ENCODE measurements at regions of chr18 and their contacts with region 1.

Region 1: GRCh38 chr18:26621161-26622026 is 73.0 kb upstream of the KCTD1 start:
- DNase-seq: peak; percentile 31 to 81 (median 63)
- H3K4me3 ChIP-seq: peak overlapping the region in 1 of 4 donors; percentile 39
- H3K27ac ChIP-seq: no peak overlapping the region
- H3K4me1 ChIP-seq: no peaks in the 10 kb centered on the region
- H3K27me3 ChIP-seq: no peaks in the 10 kb centered on the region
- CTCF ChIP-seq: peak; percentile 41 to 75 (median 70)
- POLR2A ChIP-seq: no peak

Region 2: GRCh38 chr18:26771524-26771923 is 150.1 kb after region 1 on chr18:
- intact Hi-C with region 1: loop called in 1 of 2 experiments (anchors 5 kb)
- DNase-seq: peak; percentile 38 to 67 (median 61)
- H3K4me3 ChIP-seq: no peak overlapping the region
- H3K27ac ChIP-seq: no peak overlapping the region
- H3K4me1 ChIP-seq: no peaks in the 10 kb centered on the region
- H3K27me3 ChIP-seq: no peaks in the 10 kb centered on the region
- CTCF ChIP-seq: peak; percentile 57 to 75 (median 70)
- POLR2A ChIP-seq: no peak

Measured in adrenal gland (tissue), 19 donors.